Activated CD8-positive, alpha-beta memory T cell treated with anti-CD3 and anti-CD28 coated beads, Interleukin-2, amount 10 ng/mL, durations not matched to agents 7 days and 5 days (primary cell): ENCODE measurements at regions of chr6 and their contacts with region 1.

Region 1: DNA sequence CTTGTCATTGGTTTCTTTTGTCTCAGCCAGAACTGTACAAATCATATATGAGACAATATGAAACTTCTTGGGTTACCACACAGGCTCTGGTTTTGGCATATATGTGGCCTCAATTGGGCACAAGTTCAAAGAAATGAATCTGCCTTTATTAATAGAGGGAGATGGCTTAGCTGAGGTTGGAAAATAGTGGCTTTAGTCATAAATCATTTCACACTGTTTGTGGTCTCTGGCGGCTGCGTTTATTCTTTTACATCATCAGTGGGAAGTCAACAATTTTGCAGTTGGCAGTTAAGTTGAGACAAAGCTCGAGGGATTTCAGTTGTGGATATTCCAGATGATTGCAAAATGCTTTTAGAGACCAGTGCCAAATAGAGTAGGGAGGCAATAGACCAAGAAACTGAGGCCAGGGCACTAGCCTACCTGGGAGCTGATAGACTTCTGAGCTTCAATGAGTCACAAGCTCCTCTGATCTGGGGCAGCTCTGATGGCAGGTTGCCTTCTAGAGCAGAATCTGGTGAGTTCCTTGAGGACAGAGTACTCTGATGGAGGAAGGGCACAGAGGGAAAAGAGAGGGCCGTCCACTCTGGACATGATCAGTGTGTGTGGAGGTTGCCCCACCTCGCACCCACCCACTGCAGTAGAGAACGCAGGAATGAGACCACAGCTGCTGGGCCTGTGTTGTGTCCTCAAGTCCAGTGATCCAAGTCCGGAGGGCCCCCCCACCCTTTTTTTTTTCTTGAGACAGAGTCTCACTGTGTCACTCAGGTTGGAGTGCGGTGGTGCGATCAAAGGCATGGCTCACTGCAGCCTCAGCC is 73.5 kb downstream of the ARMC2 start:
- DNase-seq: peak; percentile 86
- ATAC-seq: peak; percentile 84
- H3K4me3 Mint-ChIP-seq: peak overlapping the region; percentile 41
- H3K27ac Mint-ChIP-seq: peak overlapping the region; percentile 69
- H3K4me1 Mint-ChIP-seq: peaks cover 48% of the 10 kb centered on the region
- H3K27me3 Mint-ChIP-seq: peaks cover 85% of the 10 kb centered on the region

Region 2: DNA sequence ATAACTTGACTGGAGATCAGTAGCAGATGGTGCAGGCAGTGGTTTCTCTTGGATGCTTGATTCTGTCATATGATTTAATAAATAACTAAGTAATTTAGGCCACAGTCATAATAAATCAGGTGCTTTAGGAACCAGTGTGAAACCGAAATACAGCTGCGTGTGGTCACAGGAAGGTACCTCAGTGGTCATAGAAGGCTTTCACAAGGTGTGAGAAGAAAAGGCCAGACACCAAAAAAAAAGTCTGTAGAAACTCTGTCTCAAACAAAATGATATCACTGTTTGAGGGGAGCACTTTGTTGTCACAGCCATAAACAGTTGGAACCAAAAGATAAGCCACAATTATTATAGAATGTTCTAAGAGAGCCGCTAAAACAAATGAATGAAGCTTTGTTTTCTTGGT is 17.0 kb before region 1 on chr6:
- CTCF ChIA-PET with region 1: interaction called, 17 read pairs
- DNase-seq: peak; percentile 67
- ATAC-seq: peak; percentile 34
- H3K4me3 Mint-ChIP-seq: no peak overlapping the region
- H3K27ac Mint-ChIP-seq: no peak overlapping the region
- H3K4me1 Mint-ChIP-seq: peaks cover 38% of the 10 kb centered on the region
- H3K27me3 Mint-ChIP-seq: peaks cover 10% of the 10 kb centered on the region